ENCODE measurements at regions of chr19 and their contacts with region 1.

Region 1: DNA sequence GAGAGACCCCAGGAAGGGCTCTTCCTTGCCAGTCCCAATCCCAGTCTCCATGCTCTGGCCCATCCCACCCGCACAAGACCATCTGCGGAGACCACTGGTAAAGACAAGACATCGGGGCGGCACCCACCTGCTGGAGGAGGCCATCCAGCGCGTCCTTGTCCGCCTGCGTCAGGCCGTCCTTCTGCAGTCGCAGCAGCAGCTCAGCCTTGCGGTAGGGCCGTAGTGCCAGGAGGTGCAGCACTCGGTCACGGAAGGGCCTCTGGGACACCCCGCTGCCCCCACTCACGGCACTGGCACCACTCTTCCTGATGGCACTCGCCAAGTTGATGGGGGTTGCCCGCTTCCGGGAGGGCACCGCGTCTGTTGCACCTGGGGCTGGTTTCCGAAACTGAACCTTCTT is 23.5 kb upstream of the ISYNA1 start:
- DNase-seq: no peak
- ATAC-seq: no peak
- H3K4me3 Mint-ChIP-seq: no peak overlapping the region
- H3K27ac Mint-ChIP-seq: peak overlapping the region; percentile 48; the same call in 1 of the 2 replicates
- H3K4me1 Mint-ChIP-seq: no peaks in the 10 kb centered on the region
- H3K27me3 Mint-ChIP-seq: no peaks in the 10 kb centered on the region
- CTCF ChIP-seq: no peak

Region 2: DNA sequence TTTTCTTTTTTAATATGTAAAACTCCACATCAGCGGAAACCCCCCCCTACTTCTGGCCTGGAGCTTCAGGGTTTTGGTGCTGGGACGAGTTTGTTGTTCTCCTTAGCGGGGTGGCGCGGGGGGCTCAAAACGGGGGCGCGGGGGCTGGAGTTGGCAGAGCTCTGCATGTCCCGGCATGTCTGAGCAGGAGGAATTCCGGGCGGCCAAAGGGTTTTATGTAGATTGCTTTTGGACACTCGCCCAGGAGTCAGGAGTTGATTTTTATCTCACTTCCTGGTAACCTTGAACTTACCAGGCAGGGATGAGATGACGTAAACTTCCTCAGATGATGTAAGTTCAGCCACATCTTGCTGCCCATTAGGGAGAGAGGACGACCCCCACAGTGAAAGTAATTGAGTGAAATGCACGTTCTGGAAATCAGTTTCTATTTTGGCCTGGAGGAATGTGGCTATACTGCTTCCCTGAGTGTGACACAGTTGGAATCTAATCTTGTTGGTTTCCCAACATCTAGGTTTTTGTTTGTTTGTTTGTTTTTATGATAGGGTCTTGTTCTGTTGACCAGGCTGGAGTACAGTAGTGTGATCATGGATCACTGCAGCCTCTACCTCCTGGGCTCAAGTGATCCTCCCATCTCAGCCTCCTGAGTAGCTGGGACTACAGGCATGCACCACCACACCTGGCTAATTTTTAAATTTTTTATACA is 96.5 kb before region 1 on chr19:
- CTCF ChIA-PET with region 1: no interaction called
- POLR2A ChIA-PET with region 1: no interaction called
- DNase-seq: peak; percentile 38
- ATAC-seq: no peak
- H3K4me3 Mint-ChIP-seq: no peak overlapping the region
- H3K27ac Mint-ChIP-seq: peak overlapping the region; percentile 97
- H3K4me1 Mint-ChIP-seq: peaks cover 45% of the 10 kb centered on the region
- H3K27me3 Mint-ChIP-seq: no peaks in the 10 kb centered on the region
- CTCF ChIP-seq: no peak

Region 3: GRCh38 chr19:18436671-18437490 is 24.6 kb before region 1 on chr19:
- CTCF ChIA-PET with region 1: interaction called, 27 read pairs
- POLR2A ChIA-PET with region 1: interaction called, 4 read pairs
- DNase-seq: peak; percentile 92
- ATAC-seq: peak; percentile 64
- H3K4me3 Mint-ChIP-seq: peak overlapping the region; percentile 66
- H3K27ac Mint-ChIP-seq: peak overlapping the region; percentile 63; the same call in 1 of the 2 replicates
- H3K4me1 Mint-ChIP-seq: peaks cover 34% of the 10 kb centered on the region
- H3K27me3 Mint-ChIP-seq: no peaks in the 10 kb centered on the region
- CTCF ChIP-seq: no peak

Region 4: DNA sequence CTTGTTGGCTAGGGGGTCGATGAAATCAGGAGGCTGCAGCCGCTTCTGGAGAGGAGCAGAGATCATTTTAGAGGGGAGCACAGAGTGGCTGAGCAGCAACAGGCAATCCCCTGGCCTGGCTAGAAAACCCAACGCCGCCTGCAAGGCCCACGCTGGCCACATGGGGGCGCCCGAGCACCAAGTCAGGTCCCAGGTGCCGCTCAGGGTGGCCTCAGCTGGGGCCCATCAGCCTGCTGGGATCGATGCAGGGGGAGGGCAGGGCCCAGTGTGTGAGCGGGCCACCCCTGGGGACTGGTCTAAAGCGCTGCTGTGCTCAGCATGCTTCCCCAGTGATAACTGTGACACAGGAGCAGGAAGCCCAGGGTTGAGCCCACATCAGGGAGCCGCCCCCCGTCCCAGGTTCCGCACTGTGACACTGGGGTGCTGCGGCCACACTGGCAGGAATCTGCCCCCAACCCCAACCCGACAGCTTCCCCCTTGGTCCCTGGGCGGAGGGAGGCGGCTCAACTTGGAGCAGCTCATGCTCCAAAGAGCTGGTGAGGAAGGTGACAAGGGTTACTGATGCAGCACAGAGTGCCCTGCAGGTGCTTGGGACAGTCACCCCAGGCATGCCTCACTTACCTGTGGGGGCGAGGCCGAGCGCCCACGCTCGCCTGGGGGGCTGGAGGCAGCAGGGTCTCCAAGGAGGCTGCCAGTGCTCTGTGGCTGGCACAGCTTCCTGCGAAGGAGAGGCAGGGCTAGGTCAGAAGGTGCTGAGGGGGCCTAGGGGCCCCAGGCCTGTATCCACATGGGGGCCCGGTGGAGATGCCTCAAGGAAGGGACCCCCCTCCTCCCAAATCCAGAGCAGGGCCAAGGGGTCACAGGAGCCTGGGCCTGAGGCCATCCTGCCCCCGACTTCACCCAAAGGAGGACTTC is 10.3 kb before region 1 on chr19:
- CTCF ChIA-PET with region 1: interaction called, 37 read pairs
- POLR2A ChIA-PET with region 1: no interaction called
- DNase-seq: peak; percentile 95
- ATAC-seq: peak; percentile 83
- H3K4me3 Mint-ChIP-seq: no peak overlapping the region
- H3K27ac Mint-ChIP-seq: no peak overlapping the region; the same call in 1 of the 2 replicates
- H3K4me1 Mint-ChIP-seq: peaks cover 3% of the 10 kb centered on the region; the same call in 1 of the 2 replicates
- H3K27me3 Mint-ChIP-seq: no peaks in the 10 kb centered on the region
- CTCF ChIP-seq: peak; percentile 98

Region 5: DNA sequence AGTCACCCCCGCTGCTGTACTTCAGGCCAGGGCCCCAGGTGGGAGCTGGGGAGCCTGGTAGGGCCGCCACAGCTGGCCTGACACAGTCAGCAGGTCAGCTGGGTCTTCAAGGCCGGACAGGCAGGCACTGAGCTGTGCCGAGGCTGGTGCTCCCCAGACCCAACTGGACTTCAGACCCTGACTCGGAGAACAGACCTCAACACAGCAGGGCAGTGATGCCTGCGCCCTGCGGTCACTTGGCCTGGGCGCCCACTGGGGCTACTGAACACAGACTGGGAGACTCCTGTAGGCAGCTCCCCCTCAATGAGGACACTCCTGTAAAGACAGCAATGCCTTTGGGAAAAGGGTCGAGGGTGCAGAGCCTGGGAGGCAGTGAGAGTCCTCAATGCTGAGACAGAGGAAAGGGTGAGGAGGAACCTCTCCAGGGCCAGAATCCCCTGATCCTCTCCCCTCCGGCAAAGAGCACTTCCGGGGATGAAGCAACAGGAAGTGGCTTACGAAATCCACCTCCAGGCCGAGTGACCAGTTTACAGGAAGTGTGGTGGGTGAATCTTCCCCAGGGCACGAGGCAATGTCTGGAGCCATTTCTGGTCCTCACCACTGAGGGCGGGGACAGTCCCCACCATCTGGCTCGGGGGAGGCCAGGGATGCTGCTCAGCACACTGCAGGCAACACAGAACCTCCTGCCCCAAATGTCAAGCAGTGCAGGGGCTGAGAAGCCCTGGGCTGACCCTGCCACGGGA is 17.3 kb after region 1 on chr19:
- CTCF ChIA-PET with region 1: interaction called, 10 read pairs
- POLR2A ChIA-PET with region 1: no interaction called
- DNase-seq: no peak
- ATAC-seq: no peak
- H3K4me3 Mint-ChIP-seq: no peak overlapping the region
- H3K27ac Mint-ChIP-seq: peak overlapping the region; percentile 85
- H3K4me1 Mint-ChIP-seq: peaks cover 28% of the 10 kb centered on the region
- H3K27me3 Mint-ChIP-seq: no peaks in the 10 kb centered on the region
- CTCF ChIP-seq: no peak

Measured in WTC11 (cell line).